CD4-positive, alpha-beta memory T cell (primary cell): ENCODE measurements at regions of chr21 and their contacts with region 1.

Region 1: GRCh38 chr21:28745131-28746016 is 247.3 kb downstream of the LTN1 start:
- DNase-seq: peak; percentile 61 to 70 (median 65)
- H3K4me3 ChIP-seq: peak overlapping the region; percentile 31 to 51
- H3K4me3 Mint-ChIP-seq: no peak overlapping the region
- H3K27ac ChIP-seq: no peak overlapping the region
- H3K27ac Mint-ChIP-seq: no peak overlapping the region
- H3K4me1 ChIP-seq: peaks cover 5% of the 10 kb centered on the region
- H3K4me1 Mint-ChIP-seq: no peaks in the 10 kb centered on the region
- H3K27me3 ChIP-seq: no peaks in the 10 kb centered on the region
- H3K27me3 Mint-ChIP-seq: no peaks in the 10 kb centered on the region

Region 2: DNA sequence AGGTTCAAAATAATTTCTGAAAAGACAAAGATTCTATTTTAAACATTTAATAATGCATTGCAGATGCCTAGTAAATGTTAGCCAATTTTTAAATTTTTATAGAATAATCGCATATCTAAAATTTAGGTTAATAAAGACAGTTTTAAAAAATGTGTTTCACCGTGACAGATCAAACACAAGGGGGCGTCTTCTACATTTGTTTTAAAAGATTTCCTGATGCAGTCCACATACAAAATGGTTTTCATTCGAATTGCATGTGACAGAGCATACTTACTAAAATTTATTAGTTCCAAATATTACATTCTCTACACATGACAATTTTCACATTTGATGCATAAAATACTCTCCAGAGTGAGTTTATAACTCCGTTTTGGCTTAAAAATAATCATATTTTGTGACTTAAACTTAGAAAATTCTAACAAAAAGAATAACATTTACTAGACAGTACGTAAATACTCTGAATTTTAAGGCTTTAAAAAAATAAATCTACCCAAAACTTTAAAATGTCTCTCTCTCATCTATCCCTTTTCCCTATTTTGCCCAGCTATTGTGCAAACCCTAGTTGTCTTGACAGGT is 1975.7 kb before region 1 on chr21:
- CTCF ChIA-PET with region 1: no interaction called
- POLR2A ChIA-PET with region 1: no interaction called
- intact Hi-C with region 1: loop called (anchors 1 kb)
- DNase-seq: peak in 1 of 5 donors; percentile 2
- H3K4me3 ChIP-seq: no peak overlapping the region
- H3K4me3 Mint-ChIP-seq: no peak overlapping the region
- H3K27ac ChIP-seq: no peak overlapping the region
- H3K27ac Mint-ChIP-seq: no peak overlapping the region
- H3K4me1 ChIP-seq: no peaks in the 10 kb centered on the region
- H3K4me1 Mint-ChIP-seq: no peaks in the 10 kb centered on the region
- H3K27me3 ChIP-seq: no peaks in the 10 kb centered on the region
- H3K27me3 Mint-ChIP-seq: peaks cover 1 to 3% of the 10 kb centered on the region in 2 donors

Region 3: DNA sequence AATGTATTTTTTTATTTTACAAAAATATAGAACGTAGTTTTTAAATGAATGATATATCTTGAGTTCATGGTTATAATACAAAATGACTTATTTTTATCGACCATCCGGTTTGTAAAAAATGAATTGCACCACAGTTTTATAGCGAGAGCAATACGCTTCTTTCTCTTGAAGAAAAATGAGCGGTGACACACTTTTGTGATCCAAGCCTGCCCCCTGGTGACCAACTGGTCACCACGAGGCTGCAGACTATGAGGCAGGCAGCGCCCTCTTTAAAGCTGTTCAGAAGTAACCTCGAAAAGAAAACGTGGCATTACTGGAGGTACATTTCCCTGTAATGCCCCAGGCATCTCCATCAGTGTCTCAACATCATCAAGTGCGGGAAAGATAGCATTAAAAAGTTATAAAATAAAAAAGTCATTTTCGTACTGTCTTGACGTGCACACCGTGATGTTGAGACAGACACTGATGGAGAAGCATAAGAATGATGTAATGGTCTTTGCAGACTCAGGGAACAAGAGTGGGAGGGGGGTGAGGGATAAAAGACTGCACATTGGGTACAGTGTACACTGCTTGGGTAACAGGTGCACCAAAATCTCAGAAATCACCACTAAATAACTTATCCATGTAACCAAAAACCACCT is 1044.3 kb before region 1 on chr21:
- CTCF ChIA-PET with region 1: interaction called, 3 read pairs
- POLR2A ChIA-PET with region 1: no interaction called
- intact Hi-C with region 1: loop called (anchors 2 kb)
- DNase-seq: peak; percentile 3 to 47 (median 30)
- H3K4me3 ChIP-seq: no peak overlapping the region
- H3K4me3 Mint-ChIP-seq: no peak overlapping the region
- H3K27ac ChIP-seq: no peak overlapping the region
- H3K27ac Mint-ChIP-seq: no peak overlapping the region
- H3K4me1 ChIP-seq: no peaks in the 10 kb centered on the region
- H3K4me1 Mint-ChIP-seq: peaks cover 0 to 3% (median under 1%) of the 10 kb centered on the region in 4 donors
- H3K27me3 ChIP-seq: no peaks in the 10 kb centered on the region
- H3K27me3 Mint-ChIP-seq: peaks cover 0 to 2% of the 10 kb centered on the region in 2 donors

Region 4: DNA sequence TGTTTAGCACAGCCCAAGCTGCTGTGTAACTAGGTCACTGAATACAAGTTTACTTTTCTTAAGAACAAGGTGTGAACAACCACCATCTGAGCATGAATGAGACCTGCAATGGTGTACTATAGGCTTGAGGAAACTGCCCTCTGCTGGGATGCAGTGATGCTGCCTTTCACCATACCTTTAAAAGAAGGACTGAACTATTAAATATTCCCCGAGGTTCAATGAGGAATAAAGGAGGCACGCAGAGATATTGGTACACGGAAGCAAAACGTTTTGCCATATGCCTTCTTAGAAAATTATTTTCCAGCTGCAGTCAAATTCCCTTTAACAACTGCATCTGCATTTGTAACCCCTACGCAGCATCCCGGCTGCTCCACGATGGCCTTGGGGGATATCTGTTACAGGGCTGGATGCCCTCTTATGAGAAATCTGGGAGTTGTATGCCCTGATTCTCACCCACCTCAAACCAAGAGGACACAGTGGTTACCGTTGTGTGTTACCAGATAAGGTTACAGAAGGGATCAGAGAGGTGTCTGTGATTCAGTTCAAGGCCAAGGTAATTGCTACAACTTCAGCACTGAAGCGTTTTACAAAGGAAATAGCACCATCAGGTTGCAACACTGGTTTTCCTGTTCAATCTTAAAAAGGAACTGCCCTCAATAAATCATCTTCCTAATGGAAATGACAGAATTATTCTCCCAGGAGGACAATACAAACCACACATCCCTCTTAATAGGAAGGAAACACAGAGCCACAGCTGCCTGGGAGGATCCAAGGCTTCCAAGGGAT is 223.2 kb before region 1 on chr21:
- CTCF ChIA-PET with region 1: interaction called, 174 read pairs
- POLR2A ChIA-PET with region 1: interaction called, 8 read pairs
- intact Hi-C with region 1: loop called (anchors 1 kb)
- DNase-seq: no peak
- H3K4me3 ChIP-seq: no peak overlapping the region
- H3K4me3 Mint-ChIP-seq: no peak overlapping the region
- H3K27ac ChIP-seq: no peak overlapping the region
- H3K27ac Mint-ChIP-seq: no peak overlapping the region
- H3K4me1 ChIP-seq: no peaks in the 10 kb centered on the region
- H3K4me1 Mint-ChIP-seq: peaks cover 0 to 9% (median 2%) of the 10 kb centered on the region in 4 donors
- H3K27me3 ChIP-seq: no peaks in the 10 kb centered on the region
- H3K27me3 Mint-ChIP-seq: peaks cover 0 to 3% of the 10 kb centered on the region in 2 donors

Region 5: DNA sequence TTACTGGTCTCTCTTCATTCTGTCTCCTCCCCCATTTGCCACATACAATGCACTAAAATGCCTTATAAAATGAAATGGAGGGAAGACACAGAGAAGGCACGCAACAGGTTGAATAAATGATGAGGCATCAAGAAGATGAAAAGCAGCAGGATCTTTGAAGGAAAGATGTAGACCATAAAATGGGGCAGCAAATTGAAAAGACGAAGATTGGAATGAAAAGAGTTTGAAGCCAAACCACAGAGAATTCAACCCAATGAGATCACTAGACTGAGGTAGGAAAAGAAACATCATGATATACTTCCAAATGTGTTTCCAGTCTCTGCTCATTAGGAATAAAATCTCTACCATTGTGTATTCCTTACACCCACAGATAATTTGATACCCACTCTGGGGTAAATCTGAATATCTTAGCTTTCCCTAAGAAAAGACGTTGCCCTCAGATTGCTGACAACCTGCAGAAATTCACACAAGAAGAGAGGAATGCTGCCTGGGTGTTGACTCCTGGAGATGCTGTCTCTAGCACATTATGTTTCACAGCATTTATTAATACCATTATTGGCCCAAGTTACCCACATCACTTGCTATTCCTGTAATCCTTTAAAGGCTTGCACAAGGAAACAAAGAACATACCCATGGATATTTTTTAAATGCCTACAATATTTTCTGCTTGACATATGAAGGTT is 16.4 kb after region 1 on chr21:
- CTCF ChIA-PET with region 1: interaction called, 39 read pairs
- POLR2A ChIA-PET with region 1: no interaction called
- intact Hi-C with region 1: no loop called
- DNase-seq: no peak
- H3K4me3 ChIP-seq: no peak overlapping the region
- H3K4me3 Mint-ChIP-seq: no peak overlapping the region
- H3K27ac ChIP-seq: no peak overlapping the region
- H3K27ac Mint-ChIP-seq: peak overlapping the region in 1 of 7 donors; percentile 21
- H3K4me1 ChIP-seq: no peaks in the 10 kb centered on the region
- H3K4me1 Mint-ChIP-seq: no peaks in the 10 kb centered on the region
- H3K27me3 ChIP-seq: no peaks in the 10 kb centered on the region
- H3K27me3 Mint-ChIP-seq: no peaks in the 10 kb centered on the region

Region 6: GRCh38 chr21:28832013-28832714 is 86.8 kb after region 1 on chr21:
- CTCF ChIA-PET with region 1: interaction called, 11 read pairs
- POLR2A ChIA-PET with region 1: interaction called, 4 read pairs
- intact Hi-C with region 1: no loop called
- DNase-seq: peak; percentile 39 to 65 (median 52)
- H3K4me3 ChIP-seq: peak overlapping the region in 1 of 2 donors; percentile 36
- H3K4me3 Mint-ChIP-seq: peak overlapping the region; percentile 33 to 89 (median 69)
- H3K27ac ChIP-seq: no peak overlapping the region
- H3K27ac Mint-ChIP-seq: peak overlapping the region; percentile 48 to 89 (median 67)
- H3K4me1 ChIP-seq: peaks cover 82% of the 10 kb centered on the region
- H3K4me1 Mint-ChIP-seq: peaks cover 58 to 83% (median 66%) of the 10 kb centered on the region in 4 donors
- H3K27me3 ChIP-seq: no peaks in the 10 kb centered on the region
- H3K27me3 Mint-ChIP-seq: no peaks in the 10 kb centered on the region

Region 7: GRCh38 chr21:29403922-29404538 is 658.7 kb after region 1 on chr21:
- CTCF ChIA-PET with region 1: no interaction called
- POLR2A ChIA-PET with region 1: no interaction called
- intact Hi-C with region 1: no loop called
- DNase-seq: no peak
- H3K4me3 ChIP-seq: no peak overlapping the region
- H3K4me3 Mint-ChIP-seq: no peak overlapping the region
- H3K27ac ChIP-seq: no peak overlapping the region
- H3K27ac Mint-ChIP-seq: no peak overlapping the region
- H3K4me1 ChIP-seq: no peaks in the 10 kb centered on the region
- H3K4me1 Mint-ChIP-seq: peaks cover 0 to 9% (median 1%) of the 10 kb centered on the region in 4 donors
- H3K27me3 ChIP-seq: no peaks in the 10 kb centered on the region
- H3K27me3 Mint-ChIP-seq: no peaks in the 10 kb centered on the region